ENCODE measurements at regions of chr1 and their contacts with region 1.

Region 1: GRCh38 chr1:172443626-172444453 is at the start of gene PIGC:
- DNase-seq: peak; percentile 92
- H3K4me3 ChIP-seq: peak within 1 kb of the TSS; percentile 89 to 99
- H3K27ac ChIP-seq: peak within 1 kb of the TSS; percentile 45 to 73; a peak in 3 of 4 replicates
- H3K4me1 ChIP-seq: peaks cover 0 to 12% of the 10 kb centered on the region in 2 experiments; a peak in 3 of 4 replicates
- H3K27me3 ChIP-seq: no peaks in the 10 kb centered on the region
- CTCF ChIP-seq: peak; percentile 86
- EP300 ChIP-seq: no peak; a peak in 1 of 4 replicates
- RAD21 ChIP-seq: peak; percentile 72
- polyA plus RNA-seq, gene PIGC: 20.6 and 31.4 TPM in 2 replicates

Region 2: GRCh38 chr1:172429331-172430127 is 14.3 kb before region 1 on chr1:
- CTCF ChIA-PET with region 1: interaction called, 12 read pairs
- POLR2A ChIA-PET with region 1: no interaction called
- DNase-seq: peak; percentile 40
- H3K4me3 ChIP-seq: no peak overlapping the region
- H3K27ac ChIP-seq: no peak overlapping the region
- H3K4me1 ChIP-seq: no peaks in the 10 kb centered on the region
- H3K27me3 ChIP-seq: no peaks in the 10 kb centered on the region
- CTCF ChIP-seq: peak; percentile 87
- EP300 ChIP-seq: no peak
- RAD21 ChIP-seq: peak; percentile 79

Measured in SK-N-SH (cell line).